Sigmoid colon (tissue), 7 donors: ENCODE measurements at regions of chr7 and their contacts with region 1.

Region 1: DNA sequence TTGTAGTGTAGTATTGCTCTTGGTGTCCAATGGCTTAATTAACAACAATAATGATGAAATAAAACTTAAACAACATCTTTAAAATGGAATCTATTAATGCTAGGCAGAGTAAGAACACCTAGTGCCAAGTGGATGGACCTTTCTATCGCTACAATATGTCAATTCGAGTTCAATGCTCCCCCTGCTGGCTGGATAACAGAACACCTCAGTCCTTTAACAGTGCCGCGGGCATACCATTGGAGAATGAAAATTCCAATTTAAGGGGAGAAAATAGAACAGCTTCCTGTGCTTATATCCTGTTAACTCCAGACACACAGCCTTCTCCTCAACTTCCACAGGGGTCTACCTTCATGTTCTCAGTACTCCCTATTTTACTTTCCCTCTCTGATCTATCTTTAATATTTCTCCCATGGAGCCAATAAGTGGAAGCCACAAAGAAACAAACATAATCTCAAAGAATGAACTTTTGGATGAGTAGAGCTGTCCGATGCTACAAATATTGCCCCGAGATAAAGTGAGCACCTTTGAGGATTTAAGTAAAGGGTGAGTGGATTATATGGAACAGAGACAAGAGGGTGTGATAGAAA is 41.4 kb downstream of the COL1A2 start:
- DNase-seq: peak; percentile 86
- H3K4me3 ChIP-seq: no peak overlapping the region
- H3K27ac ChIP-seq: no peak overlapping the region
- H3K4me1 ChIP-seq: peaks cover 0 to 16% (median 2%) of the 10 kb centered on the region in 4 donors
- H3K27me3 ChIP-seq: no peaks in the 10 kb centered on the region
- CTCF ChIP-seq: peak; percentile 38 to 78 (median 74)
- EP300 ChIP-seq: no peak
- POLR2A ChIP-seq: no peak

Region 2: GRCh38 chr7:94289071-94289470 is 147.0 kb before region 1 on chr7:
- intact Hi-C with region 1: loop called (anchors 1 kb)
- DNase-seq: peak; percentile 88
- H3K4me3 ChIP-seq: no peak overlapping the region
- H3K27ac ChIP-seq: no peak overlapping the region
- H3K4me1 ChIP-seq: no peaks in the 10 kb centered on the region
- H3K27me3 ChIP-seq: no peaks in the 10 kb centered on the region
- CTCF ChIP-seq: peak; percentile 87 to 98 (median 93)
- EP300 ChIP-seq: no peak
- POLR2A ChIP-seq: no peak

Region 3: DNA sequence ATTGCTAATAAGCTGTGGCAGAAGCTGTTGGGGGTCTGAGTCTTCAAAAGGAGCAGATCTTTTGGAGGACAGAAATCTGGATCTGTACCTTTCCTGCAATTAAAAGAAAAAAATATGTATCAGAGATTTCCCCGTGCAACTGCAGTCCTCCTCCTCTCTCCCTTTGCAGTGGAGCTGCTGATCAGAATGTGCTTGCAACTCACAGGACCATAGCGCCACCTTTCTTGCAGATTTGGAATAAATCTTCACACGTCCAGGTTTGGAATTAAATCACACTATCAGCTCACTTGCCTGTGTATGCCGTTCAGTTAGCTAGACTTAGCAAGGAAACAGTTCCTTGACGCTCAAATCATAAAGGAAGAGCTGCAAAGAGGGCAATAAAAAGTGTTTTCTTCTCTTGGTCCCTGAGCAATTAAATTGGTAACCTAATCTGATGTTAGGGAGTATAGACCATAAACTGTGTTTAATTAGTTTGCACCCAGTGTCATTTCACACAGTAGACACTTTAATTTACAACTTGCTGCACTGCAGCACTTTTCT is 810.8 kb after region 1 on chr7:
- intact Hi-C with region 1: loop called (anchors 5 kb)
- DNase-seq: peak; percentile 70
- H3K4me3 ChIP-seq: no peak overlapping the region
- H3K27ac ChIP-seq: no peak overlapping the region
- H3K4me1 ChIP-seq: peaks cover 0 to 9% (median 0%) of the 10 kb centered on the region in 4 donors
- H3K27me3 ChIP-seq: no peaks in the 10 kb centered on the region
- CTCF ChIP-seq: peak in 3 of 4 experiments; percentile 74 to 78 (median 76)
- EP300 ChIP-seq: no peak
- POLR2A ChIP-seq: no peak

Region 4: DNA sequence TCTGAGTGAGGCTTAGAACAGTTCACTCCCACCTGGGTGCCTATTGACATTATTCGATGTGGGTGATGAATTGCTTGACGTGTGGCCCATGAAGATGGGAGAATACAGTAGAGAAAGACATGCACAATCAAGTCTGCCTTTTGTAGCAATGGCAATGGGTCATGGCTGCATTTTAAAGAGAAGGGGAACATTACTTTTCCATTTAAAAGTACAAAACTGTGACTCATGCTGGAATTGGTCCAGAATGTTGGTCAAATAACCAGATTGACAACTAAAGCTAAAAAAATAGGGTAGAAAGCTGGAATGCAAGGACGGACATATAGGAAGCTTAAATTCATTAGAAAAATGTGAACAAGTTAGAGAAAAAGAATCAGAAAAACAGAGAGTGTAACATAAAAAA is 1989.9 kb after region 1 on chr7:
- intact Hi-C with region 1: no loop called
- DNase-seq: no peak
- H3K4me3 ChIP-seq: no peak overlapping the region
- H3K27ac ChIP-seq: no peak overlapping the region
- H3K4me1 ChIP-seq: no peaks in the 10 kb centered on the region
- H3K27me3 ChIP-seq: no peaks in the 10 kb centered on the region
- CTCF ChIP-seq: no peak
- EP300 ChIP-seq: no peak
- POLR2A ChIP-seq: no peak